K562 (cell line): ENCODE measurements at regions of chr17 and their contacts with region 1.

Region 1: GRCh38 chr17:41579484-41580243 is 7.0 kb downstream of the KRT14 start:
- DNase-seq: peak; percentile 92 to 97 (median 94)
- ATAC-seq: peak; percentile 98
- H3K4me3 ChIP-seq: no peak overlapping the region
- H3K27ac ChIP-seq: no peak overlapping the region
- H3K4me1 ChIP-seq: peaks cover 2 to 9% of the 10 kb centered on the region in 2 experiments; a peak in 3 of 5 replicates
- H3K27me3 ChIP-seq: peaks cover 0 to 25% of the 10 kb centered on the region in 2 experiments; a peak in 2 of 5 replicates
- CTCF ChIP-seq: peak; percentile 92 to 97 (median 92)
- EP300 ChIP-seq: no peak
- POLR2A ChIP-seq: no peak
- RAD21 ChIP-seq: peak; percentile 25 to 68; a peak in 3 of 4 replicates

Region 2: DNA sequence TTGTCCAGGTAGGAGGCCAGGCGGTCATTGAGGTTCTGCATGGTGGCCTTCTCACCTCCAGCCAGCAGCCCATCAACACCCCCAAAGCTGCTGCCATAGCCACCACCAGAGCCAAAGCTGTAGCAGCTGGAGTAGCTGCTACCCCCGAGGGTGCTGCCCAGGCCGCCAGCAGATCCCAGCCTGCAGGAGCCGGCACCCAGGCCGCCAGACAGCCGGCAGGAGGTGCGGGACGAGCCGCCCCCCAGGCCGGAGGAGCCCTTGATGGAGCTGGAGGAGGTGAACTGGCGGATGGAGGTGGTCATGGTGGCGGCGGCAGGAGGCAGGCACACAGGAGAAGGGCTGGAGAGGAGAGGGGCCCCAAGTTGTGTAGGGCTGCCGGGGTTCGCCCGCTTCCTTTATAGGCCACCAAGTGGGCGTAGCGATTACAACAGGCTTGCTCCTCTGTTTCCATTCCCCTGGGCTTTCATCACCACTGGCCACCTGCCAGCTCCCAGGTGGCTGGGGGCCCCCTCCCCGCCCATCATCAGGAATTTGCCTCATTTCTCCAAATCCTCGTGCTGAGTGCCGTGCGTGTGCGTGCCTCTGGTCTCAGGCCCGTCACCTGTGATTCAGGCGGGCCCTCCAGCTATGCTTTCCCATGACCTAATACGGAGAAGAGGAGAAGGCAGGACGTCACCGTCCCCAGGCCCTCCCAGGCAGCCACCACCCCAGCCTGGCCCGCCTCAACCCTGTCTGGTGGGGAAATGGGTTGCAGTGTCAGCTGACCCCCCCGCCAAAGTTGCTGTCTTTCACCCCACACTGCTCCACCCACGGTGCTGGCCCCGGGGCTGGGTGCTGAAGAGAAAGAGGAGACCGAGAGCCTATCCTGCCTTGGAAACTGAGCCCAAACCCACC is 44.8 kb after region 1 on chr17 and contains the start of gene KRT17:
- CTCF ChIA-PET with region 1: no interaction called
- POLR2A ChIA-PET with region 1: no interaction called
- in situ Hi-C with region 1: no loop called
- intact Hi-C with region 1: no loop called
- DNase-seq: peak; percentile 41 to 63 (median 52)
- ATAC-seq: peak; percentile 84
- H3K4me3 ChIP-seq: no peak within 1 kb of the TSS
- H3K27ac ChIP-seq: no peak within 1 kb of the TSS
- H3K4me1 ChIP-seq: peaks cover 0 to 19% of the 10 kb centered on the region in 2 experiments; a peak in 2 of 5 replicates
- H3K27me3 ChIP-seq: peaks cover 2 to 48% of the 10 kb centered on the region in 2 experiments; a peak in 2 of 5 replicates
- CTCF ChIP-seq: peak in 1 of 3 experiments; percentile 23; a peak in 1 of 6 replicates
- EP300 ChIP-seq: no peak
- POLR2A ChIP-seq: no peak
- RAD21 ChIP-seq: no peak
- polyA plus RNA-seq, gene KRT17: not detected

Region 3: GRCh38 chr17:41648411-41649195 is 68.9 kb after region 1 on chr17:
- CTCF ChIA-PET with region 1: interaction called, 21 read pairs
- POLR2A ChIA-PET with region 1: interaction called, 3 read pairs
- in situ Hi-C with region 1: no loop called
- intact Hi-C with region 1: loop called (anchors 1 kb)
- DNase-seq: peak; percentile 86 to 89 (median 86)
- ATAC-seq: peak; percentile 96
- H3K4me3 ChIP-seq: peak overlapping the region; percentile 23
- H3K27ac ChIP-seq: no peak overlapping the region; the same call in 2 of the 3 replicates
- H3K4me1 ChIP-seq: peaks cover 20 to 31% of the 10 kb centered on the region in 2 experiments; a peak in 4 of 5 replicates
- H3K27me3 ChIP-seq: peaks cover 0 to 4% of the 10 kb centered on the region in 2 experiments; a peak in 1 of 5 replicates
- CTCF ChIP-seq: peak; percentile 85 to 95 (median 93)
- EP300 ChIP-seq: no peak
- POLR2A ChIP-seq: no peak
- RAD21 ChIP-seq: peak; percentile 39 to 71